ENCODE measurements at regions of chr11 and their contacts with region 1.

Region 1: GRCh38 chr11:6682936-6683861 is at the start of gene MRPL17:
- DNase-seq: peak; percentile 97
- CTCF ChIP-seq: peak; percentile 85

Region 2: DNA sequence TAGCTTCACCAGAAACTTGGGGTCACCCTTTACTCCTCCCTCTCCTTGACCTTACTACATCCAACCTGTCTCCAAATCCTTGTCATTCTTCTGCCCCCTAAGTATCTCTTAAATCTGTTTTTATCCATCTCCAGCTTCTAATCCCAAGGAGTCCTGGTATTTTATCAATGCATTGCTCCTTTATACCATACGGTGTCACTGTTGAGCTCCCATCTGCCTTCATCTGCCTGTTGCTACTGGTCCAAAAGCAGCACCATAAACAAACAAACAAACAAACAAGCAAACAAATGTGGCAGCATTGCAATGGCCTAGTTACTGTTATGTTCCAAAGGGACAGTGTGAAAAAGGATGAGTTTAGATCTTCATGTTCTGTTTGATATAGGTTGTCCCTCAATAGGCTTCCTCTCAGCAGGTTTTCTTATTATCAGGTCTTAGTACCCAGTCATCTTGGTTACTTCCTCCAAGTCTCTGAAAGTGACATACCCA is 151.9 kb before region 1 on chr11:
- CTCF ChIA-PET with region 1: interaction called, 22 read pairs
- POLR2A ChIA-PET with region 1: no interaction called
- DNase-seq: peak; percentile 53
- CTCF ChIP-seq: peak; percentile 53

Region 3: DNA sequence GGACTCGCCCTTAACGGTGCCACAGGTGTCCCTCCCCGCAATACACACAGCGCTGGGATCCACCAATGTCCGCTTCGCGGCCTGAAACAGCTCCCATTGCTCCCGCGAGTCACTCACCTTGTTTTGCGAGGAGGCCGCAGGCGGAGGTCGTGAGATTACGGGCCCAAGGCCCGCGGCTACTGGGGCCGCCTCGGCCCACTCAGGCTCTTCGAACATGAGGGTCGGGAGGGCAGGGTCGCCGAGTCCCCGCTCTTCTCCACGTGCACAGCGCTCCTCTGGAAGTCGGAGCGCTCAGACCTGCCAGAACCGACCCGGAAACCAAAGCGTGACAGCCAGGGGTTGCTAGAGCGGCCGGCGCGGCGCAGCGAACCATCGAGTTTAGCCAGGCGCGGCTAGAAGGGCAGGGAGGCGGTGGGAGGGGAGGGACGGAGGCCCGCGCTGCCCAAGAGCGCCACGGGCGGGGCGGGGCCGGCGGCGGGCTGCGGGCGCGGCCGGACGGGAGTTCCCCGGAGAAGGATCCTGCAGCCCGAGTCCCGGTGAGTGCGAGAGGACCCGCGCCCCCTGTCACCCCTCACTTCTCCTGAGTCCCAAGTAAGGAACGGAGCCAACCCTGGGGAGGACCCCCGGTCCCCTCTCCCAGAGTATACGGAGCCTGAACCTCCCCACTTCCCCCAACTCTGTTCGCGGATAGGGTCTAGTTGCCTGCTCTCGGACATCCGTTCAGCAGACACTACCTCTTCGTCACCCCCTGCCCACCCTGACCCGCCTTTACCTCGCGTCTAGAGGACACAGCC is 79.7 kb before region 1 on chr11 and contains the starts of genes ILK and RRP8:
- CTCF ChIA-PET with region 1: interaction called, 22 read pairs
- POLR2A ChIA-PET with region 1: interaction called, 4 read pairs
- DNase-seq: peak; percentile 94
- CTCF ChIP-seq: no peak

Region 4: GRCh38 chr11:6619004-6619745 is 64.0 kb before region 1 on chr11 and contains the start of gene TPP1:
- CTCF ChIA-PET with region 1: interaction called, 15 read pairs
- POLR2A ChIA-PET with region 1: interaction called, 12 read pairs
- DNase-seq: peak; percentile 97
- CTCF ChIP-seq: no peak

Region 5: GRCh38 chr11:6646918-6647679 is 36.1 kb before region 1 on chr11:
- CTCF ChIA-PET with region 1: interaction called, 10 read pairs
- POLR2A ChIA-PET with region 1: no interaction called
- DNase-seq: peak; percentile 81
- CTCF ChIP-seq: no peak

Region 6: DNA sequence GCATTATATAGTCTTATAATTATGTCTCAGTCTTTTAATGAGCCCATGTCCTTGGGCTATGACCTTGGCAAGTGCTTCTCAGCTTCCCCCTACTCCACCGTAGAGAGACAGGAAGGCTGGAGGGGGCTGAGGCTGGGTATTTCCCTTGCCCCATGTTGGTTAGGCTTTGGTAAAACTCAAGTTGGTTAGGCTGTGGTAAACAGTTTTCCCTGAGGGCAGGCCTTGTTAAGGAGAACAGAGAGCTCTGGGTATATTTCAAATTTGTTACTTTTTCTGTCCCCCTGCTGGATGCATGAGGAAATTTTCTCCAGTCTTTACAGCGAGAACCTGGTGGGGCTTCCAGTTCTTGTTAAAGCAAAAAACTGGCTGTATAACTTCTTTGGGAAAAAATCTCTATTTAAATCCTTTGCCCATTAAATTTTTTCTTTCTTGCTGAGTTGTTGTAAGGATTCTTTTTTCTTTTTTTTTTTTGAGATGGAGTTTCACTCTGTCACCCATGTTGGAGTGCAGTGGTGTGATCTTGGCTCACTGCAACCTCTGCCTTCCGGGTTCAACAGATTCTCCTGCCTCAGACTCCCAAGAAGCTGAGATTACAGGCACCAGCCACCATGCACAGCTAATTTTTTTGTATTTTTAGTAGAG is 15.3 kb before region 1 on chr11:
- CTCF ChIA-PET with region 1: interaction called, 22 read pairs
- POLR2A ChIA-PET with region 1: interaction called, 7 read pairs
- DNase-seq: no peak
- CTCF ChIP-seq: no peak

Region 7: DNA sequence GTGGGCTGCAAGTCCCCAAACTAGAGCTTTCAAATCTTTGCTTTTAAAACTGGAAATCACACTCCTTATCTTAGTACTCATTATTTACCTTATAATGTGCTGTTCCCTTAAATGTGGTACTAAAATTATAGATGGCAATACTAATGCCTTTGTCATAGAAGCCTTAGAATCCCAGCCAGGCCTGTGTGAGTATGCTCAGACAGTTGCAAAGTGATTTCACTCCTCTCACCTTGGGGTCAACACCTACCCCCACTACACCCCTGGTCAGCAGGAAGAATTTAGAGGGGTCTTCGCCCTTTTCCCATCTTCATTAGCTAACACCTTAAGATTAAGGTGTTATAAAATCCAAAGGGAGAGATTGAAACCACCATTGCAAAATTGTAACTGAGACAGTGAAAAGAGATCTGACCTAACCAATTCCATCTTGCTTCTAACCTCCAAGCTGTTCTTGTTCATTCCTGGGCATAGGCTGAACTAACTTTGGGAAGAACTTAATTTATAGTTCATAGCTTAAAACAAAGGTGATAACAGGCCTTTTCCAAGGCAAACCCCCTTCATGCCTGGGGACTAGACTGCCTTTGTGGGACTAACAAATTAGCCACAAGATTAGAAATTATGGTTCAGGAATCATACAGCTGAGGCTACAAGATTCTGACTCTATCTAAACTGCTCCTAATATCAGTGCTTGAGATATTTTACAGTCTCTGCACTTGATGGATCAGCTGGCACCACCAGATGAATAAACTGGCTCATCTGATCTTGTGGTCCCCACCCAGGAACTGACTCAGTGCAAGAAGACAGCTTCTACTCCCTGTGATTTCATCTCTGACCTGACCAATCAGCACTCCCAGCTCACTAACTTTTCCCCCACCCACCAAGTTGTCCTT is 10.4 kb after region 1 on chr11:
- CTCF ChIA-PET with region 1: interaction called, 29 read pairs
- POLR2A ChIA-PET with region 1: no interaction called
- DNase-seq: no peak
- CTCF ChIP-seq: no peak